Activated CD4-positive, alpha-beta T cell treated with anti-CD3 and anti-CD28 coated beads for 36 hours (primary cell): ENCODE measurements at regions of chr6 and their contacts with region 1.

Region 1: DNA sequence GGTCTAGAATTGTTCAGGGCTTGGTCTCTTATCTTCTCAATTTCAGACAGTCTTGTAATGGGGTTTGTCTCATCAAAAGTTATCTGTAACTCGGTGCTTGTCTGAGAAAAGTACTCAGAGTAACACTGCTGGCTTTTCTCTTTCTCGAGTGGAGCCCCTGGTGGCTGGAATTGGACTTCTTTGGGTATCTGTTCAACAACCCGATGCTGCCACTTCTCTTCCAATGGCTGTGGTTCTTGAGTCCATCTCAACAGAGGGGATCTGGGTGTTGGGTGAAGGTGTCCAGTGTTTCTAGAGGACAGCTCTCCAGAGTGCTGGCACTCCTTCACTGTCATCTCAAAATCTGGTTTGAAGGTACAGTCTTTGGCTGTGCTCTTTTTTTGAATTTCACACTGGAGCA is 24.6 kb downstream of the DST start:
- DNase-seq: peak; percentile 9
- ATAC-seq: no peak
- H3K4me3 Mint-ChIP-seq: no peak overlapping the region
- H3K27ac Mint-ChIP-seq: no peak overlapping the region
- H3K4me1 Mint-ChIP-seq: no peaks in the 10 kb centered on the region
- H3K27me3 Mint-ChIP-seq: peaks cover 5% of the 10 kb centered on the region

Region 2: GRCh38 chr6:56604186-56604585 is 13.9 kb before region 1 on chr6:
- CTCF ChIA-PET with region 1: interaction called, 15 read pairs
- POLR2A ChIA-PET with region 1: no interaction called
- intact Hi-C with region 1: no loop called
- DNase-seq: peak; percentile 8
- ATAC-seq: peak; percentile 72
- H3K4me3 Mint-ChIP-seq: no peak overlapping the region
- H3K27ac Mint-ChIP-seq: no peak overlapping the region
- H3K4me1 Mint-ChIP-seq: peaks cover 38% of the 10 kb centered on the region
- H3K27me3 Mint-ChIP-seq: peaks cover 10% of the 10 kb centered on the region